ENCODE measurements at regions of chr16 and their contacts with region 1.

Region 1: GRCh38 chr16:85699628-85700027 is 10.9 kb upstream of the GINS2 start:
- DNase-seq: no peak
- ATAC-seq: peak; percentile 90
- H3K4me3 ChIP-seq: no peak overlapping the region
- H3K27ac ChIP-seq: no peak overlapping the region
- H3K4me1 ChIP-seq: no peaks in the 10 kb centered on the region
- H3K27me3 ChIP-seq: peaks cover 3% of the 10 kb centered on the region
- CTCF ChIP-seq: no peak

Region 2: DNA sequence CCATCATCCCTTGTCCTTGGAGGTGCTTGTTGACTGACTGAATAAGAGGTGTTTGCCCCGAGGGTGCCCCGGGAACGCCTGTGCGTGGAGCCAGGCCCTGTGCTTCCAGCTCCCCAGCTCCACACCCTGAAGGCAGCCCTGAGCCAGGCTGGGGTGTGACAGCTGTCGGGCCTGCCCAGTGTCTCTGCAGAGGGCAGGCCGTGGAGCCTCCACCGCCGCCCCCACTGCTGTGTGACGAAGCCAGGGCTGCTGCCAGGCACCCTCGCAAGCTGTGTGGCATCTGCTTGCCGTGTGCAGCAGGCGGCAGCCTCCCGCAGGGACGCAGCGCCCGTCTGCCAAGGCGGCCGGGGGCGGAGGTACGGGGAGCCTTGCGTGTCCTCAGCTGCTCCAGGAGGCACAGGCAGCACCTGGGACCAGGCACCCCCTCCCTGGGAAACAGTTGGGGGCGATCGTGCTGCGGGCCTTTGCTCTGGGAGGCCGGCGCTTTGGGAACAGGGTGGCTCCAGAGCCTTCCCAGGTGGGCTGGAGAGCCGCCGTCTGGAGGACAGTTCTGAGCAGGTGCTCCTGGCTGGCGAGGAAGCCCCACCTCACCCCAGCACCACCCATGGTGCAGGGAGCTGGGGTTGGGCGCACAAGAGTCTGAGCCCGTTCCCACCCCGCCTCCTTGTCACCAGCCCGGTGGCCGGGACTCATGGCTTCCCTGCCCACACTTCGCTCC is 59.9 kb before region 1 on chr16:
- intact Hi-C with region 1: loop called (anchors 10 kb)
- DNase-seq: no peak
- ATAC-seq: peak; percentile 5
- H3K4me3 ChIP-seq: no peak overlapping the region
- H3K27ac ChIP-seq: no peak overlapping the region
- H3K4me1 ChIP-seq: peaks cover 13% of the 10 kb centered on the region
- H3K27me3 ChIP-seq: no peaks in the 10 kb centered on the region
- CTCF ChIP-seq: no peak

Region 3: DNA sequence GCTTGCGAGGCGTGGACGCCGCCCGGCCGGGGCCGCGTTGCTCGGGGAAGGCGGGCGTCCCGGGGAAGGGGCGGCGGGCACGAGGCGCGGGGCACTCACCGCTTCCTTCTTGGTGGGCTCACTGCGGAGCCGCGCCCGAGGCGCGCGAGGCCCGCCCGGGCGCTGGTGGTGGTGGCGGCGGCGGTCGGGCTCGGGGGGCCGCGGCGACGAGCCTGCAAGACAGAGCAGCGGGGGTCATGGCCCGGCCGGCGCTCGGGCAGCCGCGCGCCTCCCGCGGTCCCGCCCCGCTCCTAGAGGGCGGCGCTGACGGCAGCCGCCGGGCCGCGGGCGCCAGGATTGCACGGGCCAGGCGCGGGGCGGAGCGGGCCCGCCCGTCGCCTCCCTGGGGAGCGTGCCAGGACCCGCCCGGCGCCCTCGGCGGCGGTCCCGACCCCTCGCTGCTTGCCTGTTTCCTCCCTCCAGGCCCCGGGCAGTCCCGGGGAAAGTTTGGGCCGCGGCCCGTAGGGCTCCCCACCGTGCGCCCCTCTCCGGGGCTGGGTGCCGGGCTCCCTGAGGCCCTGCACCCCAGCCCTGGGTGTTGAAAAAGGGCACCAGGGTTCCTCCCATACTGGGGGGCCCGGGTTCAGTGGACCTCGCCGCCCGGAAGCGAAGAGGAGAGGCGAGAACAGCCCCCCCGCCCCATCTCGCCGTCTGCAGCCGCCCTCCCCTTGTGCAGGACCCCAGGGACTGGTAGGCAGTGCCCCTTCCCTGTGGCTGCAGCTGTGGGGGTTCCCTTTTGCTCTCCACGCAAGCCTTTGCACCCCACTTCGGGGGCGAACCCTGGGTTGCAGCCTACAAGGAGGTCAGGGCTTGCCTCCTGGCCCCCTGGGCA is 51.4 kb after region 1 on chr16 and contains the start of gene C16orf74:
- intact Hi-C with region 1: no loop called
- DNase-seq: peak; percentile 76
- ATAC-seq: peak; percentile 87
- H3K4me3 ChIP-seq: peak within 1 kb of the TSS; percentile 55
- H3K27ac ChIP-seq: no peak within 1 kb of the TSS
- H3K4me1 ChIP-seq: peaks cover 16% of the 10 kb centered on the region
- H3K27me3 ChIP-seq: no peaks in the 10 kb centered on the region
- CTCF ChIP-seq: no peak
- total RNA-seq, gene C16orf74: 2.7 TPM